ENCODE measurements at regions of chr15 and their contacts with region 1.

Region 1: GRCh38 chr15:41283653-41284426 is 48.6 kb downstream of the OIP5 start:
- DNase-seq: peak; percentile 98
- ATAC-seq: peak; percentile 99

Region 2: DNA sequence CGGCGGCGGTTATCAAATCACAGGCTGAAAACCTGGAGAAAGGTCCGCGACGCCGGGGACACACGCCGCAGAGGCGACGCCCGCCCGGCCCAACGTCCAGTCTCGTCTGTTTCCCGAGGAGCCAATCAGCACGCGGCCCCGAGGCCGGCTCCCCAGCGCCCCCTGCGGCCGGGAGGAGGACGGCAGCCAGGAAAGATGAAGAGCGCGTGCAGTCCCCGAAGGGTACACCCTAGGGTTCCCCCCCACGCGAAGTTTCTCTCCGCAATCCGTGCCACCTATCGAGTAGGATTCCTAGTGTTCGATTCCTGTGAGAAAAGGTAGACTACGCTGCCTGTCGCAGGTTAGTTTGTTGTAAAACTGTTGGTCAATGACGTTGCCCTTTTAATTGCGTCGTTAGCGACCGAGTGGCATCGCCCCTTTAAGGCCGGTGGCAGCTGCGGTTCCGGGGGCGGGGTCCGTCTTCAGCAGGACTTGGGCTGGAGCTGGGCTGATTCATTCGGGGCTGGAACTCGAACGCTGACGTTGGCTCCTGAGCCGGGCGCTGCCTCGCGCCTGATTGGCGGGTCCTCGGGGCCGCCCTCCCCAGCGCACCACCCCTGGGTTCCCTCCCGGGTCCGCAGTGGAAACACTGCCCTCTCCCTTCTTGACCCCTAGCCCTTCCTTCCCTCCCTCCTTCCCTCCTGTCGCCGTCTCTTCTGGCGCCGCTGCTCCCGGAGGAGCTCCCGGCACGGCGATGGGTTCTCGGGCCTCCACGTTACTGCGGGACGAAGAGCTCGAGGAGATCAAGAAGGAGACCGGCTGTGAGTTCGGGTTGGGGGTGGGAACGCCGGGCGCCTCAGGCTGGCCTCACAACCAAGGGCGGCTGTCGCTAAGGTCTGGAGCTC is 52.9 kb before region 1 on chr15 and contains the starts of genes CHP1 and EXD1:
- intact Hi-C with region 1: loop called (anchors 5 kb)
- DNase-seq: peak; percentile 99
- ATAC-seq: peak; percentile 99
- total RNA-seq, gene CHP1: 124 TPM
- total RNA-seq, gene EXD1: not detected